ENCODE measurements at regions of chr6 and their contacts with region 1.

Region 1: DNA sequence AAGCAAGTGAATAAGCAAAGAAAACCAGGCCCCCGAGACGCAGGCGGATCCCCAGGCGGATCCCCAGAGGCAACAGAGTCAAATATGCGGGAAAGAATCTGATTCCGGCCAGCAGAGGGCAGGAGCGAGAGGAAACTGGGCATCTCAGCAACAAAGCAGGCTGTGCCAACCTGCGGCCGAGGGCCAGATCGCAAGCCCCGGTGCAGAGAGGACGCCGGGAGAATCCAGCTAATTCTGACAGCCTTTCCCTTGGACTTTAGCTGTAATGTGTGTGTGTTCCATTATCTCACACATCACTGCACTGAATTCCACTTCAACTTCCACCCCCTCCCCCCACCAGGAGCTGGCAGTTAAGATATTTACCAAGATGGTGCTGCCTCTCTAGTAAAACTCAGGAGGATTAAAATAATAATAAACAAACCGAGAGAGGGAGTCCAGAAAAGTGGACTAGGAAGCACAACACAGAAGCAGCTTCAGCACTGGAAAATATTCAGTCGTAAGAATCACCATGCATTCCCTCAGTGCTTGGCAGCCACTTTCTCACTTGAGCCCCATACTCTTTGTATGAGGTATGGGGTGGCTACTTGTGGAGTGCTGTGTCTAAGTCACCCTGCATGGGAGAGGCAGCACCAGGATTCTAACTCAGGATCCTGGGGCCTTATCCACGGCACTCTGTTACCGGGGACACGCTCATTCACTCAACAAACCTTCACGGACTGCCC is 66.2 kb upstream of the SNX9 start:
- DNase-seq: peak; percentile 88
- H3K4me3 ChIP-seq: no peak overlapping the region
- H3K27ac ChIP-seq: peak overlapping the region; percentile 3
- H3K4me1 ChIP-seq: peaks cover 47% of the 10 kb centered on the region
- H3K27me3 ChIP-seq: no peaks in the 10 kb centered on the region
- CTCF ChIP-seq: peak; percentile 80 to 83
- POLR2A ChIP-seq: no peak

Region 2: DNA sequence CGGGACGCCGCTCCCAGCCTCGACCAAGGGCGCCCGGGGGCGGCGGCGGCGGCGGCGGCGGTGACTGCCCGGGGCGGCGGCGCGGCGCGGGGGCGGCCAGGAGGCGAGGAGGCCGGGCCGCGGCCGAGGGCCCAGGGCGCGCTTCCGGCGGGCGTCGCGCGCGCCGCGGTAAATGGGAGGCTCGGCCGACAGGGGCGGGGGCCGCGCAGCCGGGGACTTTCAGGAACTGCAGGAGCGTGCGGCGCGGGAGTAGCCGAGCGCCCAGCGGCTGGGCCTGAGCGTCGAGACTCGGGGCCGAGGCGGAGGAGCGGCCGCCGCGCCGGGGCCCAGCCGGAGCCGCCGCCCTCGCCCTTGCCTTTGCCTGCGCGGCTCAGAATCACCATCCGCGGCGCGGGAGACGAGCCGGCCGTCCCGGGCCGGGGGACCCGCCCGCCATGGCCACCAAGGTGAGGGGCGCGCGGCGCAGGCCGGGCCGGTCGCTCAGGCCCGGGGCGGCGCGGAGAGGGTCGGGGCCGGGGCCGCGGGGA is 66.2 kb after region 1 on chr6 and contains the start of gene SNX9:
- CTCF ChIA-PET with region 1: interaction called, 11 read pairs
- POLR2A ChIA-PET with region 1: no interaction called
- dilution Hi-C with region 1: no loop called
- intact Hi-C with region 1: loop called (anchors 1 kb)
- DNase-seq: peak; percentile 65
- H3K4me3 ChIP-seq: peak within 1 kb of the TSS; percentile 50 to 99 (median 89)
- H3K27ac ChIP-seq: peak within 1 kb of the TSS; percentile 86
- H3K4me1 ChIP-seq: peaks cover 32% of the 10 kb centered on the region
- H3K27me3 ChIP-seq: no peaks in the 10 kb centered on the region
- CTCF ChIP-seq: no peak
- POLR2A ChIP-seq: peak; percentile 55
- total RNA-seq, gene SNX9: 51.4 and 54.5 TPM in 2 replicates

Region 3: DNA sequence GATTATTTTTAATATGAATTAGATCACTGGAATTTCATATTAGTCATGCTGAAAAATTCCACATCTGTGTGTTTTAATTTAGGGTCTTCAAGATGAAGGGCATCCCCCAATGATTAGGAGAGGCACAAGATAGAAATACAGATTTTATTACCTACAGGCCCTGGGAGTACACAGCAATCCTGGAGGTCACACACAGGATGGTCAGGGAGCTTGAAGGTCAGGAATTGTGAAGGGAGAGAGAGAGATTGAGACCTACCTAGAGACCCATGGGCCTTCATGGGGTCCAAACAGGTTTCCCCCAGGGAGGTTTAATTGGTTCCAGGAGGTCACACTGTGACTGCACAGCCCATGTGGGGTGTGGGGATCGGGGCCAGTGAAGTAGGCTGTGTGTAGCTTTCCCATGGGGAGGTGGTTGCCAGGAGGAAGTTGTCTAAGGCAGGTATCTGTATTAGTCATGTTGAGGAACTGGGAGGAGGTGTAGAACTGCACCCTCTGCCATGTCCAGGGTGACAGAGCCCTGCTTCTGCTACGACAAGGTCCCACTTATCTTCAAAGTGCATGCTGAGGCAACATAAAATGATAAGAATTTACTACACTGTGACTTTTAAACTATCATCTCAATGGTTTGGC is 84.5 kb after region 1 on chr6:
- CTCF ChIA-PET with region 1: interaction called, 14 read pairs
- POLR2A ChIA-PET with region 1: no interaction called
- dilution Hi-C with region 1: no loop called
- intact Hi-C with region 1: no loop called
- DNase-seq: no peak
- H3K4me3 ChIP-seq: no peak overlapping the region
- H3K27ac ChIP-seq: no peak overlapping the region
- H3K4me1 ChIP-seq: peaks cover 28% of the 10 kb centered on the region
- H3K27me3 ChIP-seq: no peaks in the 10 kb centered on the region
- CTCF ChIP-seq: no peak
- POLR2A ChIP-seq: no peak

Region 4: DNA sequence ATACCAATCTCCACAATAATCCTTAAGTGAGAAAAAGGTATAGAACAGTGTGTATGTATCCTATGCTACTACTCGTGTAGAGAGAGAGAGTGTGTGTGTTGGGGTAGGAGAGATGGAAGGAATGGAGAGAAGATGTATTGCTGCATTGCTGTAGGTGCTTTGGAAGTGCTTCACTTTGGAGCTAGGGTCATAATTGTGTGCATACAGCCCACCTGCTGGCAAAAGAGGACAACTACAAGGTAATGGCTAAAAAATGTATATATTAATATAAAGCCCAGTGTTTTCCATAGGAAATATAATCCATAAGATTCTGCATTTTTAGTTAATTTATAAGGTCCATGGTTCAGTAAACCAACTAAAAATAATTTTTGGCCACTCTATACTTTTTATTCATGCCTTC is 375.1 kb after region 1 on chr6:
- CTCF ChIA-PET with region 1: interaction called, 7 read pairs
- POLR2A ChIA-PET with region 1: no interaction called
- dilution Hi-C with region 1: no loop called
- intact Hi-C with region 1: loop called (anchors 1 kb)
- DNase-seq: peak; percentile 53
- H3K4me3 ChIP-seq: no peak overlapping the region
- H3K27ac ChIP-seq: no peak overlapping the region
- H3K4me1 ChIP-seq: no peaks in the 10 kb centered on the region
- H3K27me3 ChIP-seq: no peaks in the 10 kb centered on the region
- CTCF ChIP-seq: peak; percentile 49
- POLR2A ChIP-seq: no peak